Panc1 (cell line): ENCODE measurements at regions of chr12 and their contacts with region 1.

Region 1: DNA sequence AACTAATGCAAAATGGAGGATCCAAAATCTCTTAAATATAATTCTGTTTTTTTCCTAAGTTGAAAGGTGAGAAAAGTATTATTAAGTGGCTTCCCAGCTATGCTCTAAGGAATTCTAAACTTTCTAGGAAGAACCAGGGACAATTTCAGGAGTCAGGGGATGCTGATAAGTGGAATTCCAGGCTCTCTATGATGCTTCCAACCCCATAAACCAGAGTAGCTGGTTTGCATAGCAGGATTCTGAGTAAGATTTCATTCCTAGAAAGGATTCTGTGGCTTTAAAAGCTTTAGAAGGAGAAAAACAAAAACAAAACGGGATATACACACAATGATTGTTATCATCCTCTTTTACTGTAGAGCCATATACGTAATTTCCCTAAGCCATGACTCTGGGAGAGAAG is 93.9 kb downstream of the SLC16A7 start:
- DNase-seq: no peak
- ATAC-seq: no peak
- H3K4me3 ChIP-seq: no peak overlapping the region
- H3K27ac ChIP-seq: no peak overlapping the region
- H3K4me1 ChIP-seq: no peaks in the 10 kb centered on the region
- H3K27me3 ChIP-seq: no peaks in the 10 kb centered on the region
- CTCF ChIP-seq: no peak

Region 2: DNA sequence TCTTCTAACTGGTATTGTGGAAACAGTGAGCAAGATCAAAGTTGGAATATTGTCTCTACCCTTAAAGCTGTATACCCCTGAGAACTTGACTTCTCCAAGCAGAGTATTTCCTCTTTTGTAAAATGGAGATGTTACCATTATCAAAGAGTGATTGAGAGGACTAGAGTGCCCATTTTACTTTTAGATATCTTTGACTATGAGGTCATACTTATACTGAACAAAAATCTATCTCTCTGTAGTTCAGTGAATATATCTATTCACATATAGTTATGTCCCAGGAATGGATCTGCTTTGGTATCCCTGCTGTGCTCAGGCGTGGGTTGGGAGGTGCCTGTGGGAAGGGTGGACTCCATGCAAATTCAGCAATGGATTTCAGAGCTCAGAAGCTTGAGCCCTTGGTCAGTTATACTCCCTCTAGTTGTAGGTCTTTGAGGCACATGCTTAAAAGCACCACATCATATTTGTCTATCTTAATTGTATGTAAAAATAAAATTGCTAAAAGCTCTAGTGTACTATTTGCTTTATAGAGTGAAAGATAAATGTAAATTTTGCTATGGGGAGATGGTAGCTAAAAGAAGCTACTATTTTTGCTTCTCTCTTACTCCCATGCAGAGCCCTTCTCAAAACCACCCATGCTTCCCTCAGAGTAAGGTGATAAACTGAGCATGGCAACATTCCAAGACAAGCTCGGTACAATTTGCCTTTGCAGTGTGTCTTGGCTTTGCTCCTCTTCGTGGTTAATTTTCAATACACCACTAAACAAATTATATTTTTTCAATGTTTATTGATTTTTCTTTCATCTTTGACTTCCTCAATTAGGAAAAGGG is 39.2 kb before region 1 on chr12:
- CTCF ChIA-PET with region 1: no interaction called
- POLR2A ChIA-PET with region 1: no interaction called
- in situ Hi-C with region 1: no loop called
- intact Hi-C with region 1: loop called (anchors 1 kb)
- DNase-seq: no peak
- ATAC-seq: no peak
- H3K4me3 ChIP-seq: no peak overlapping the region
- H3K27ac ChIP-seq: no peak overlapping the region
- H3K4me1 ChIP-seq: no peaks in the 10 kb centered on the region
- H3K27me3 ChIP-seq: no peaks in the 10 kb centered on the region
- CTCF ChIP-seq: no peak

Region 3: GRCh38 chr12:59823567-59823966 is 133.8 kb after region 1 on chr12:
- CTCF ChIA-PET with region 1: no interaction called
- POLR2A ChIA-PET with region 1: no interaction called
- in situ Hi-C with region 1: no loop called
- intact Hi-C with region 1: no loop called
- DNase-seq: no peak
- ATAC-seq: no peak
- H3K4me3 ChIP-seq: no peak overlapping the region
- H3K27ac ChIP-seq: no peak overlapping the region
- H3K4me1 ChIP-seq: no peaks in the 10 kb centered on the region
- H3K27me3 ChIP-seq: no peaks in the 10 kb centered on the region
- CTCF ChIP-seq: no peak

Region 4: GRCh38 chr12:60281522-60281921 is 591.7 kb after region 1 on chr12:
- CTCF ChIA-PET with region 1: interaction called, 10 read pairs
- POLR2A ChIA-PET with region 1: no interaction called
- in situ Hi-C with region 1: no loop called
- intact Hi-C with region 1: no loop called
- DNase-seq: no peak
- ATAC-seq: no peak
- H3K4me3 ChIP-seq: no peak overlapping the region
- H3K27ac ChIP-seq: no peak overlapping the region
- H3K4me1 ChIP-seq: no peaks in the 10 kb centered on the region
- H3K27me3 ChIP-seq: no peaks in the 10 kb centered on the region
- CTCF ChIP-seq: no peak